ENCODE measurements at regions of chr5 and their contacts with region 1.

Region 1: GRCh38 chr5:112165897-112166806 is 252.9 kb downstream of the EPB41L4A start:
- DNase-seq: peak in 1 of 2 experiments; percentile 51
- H3K4me3 ChIP-seq: no peak overlapping the region
- H3K27ac ChIP-seq: peak overlapping the region; percentile 66
- H3K4me1 ChIP-seq: peaks cover 3 to 19% (median 10%) of the 10 kb centered on the region in 4 experiments; a peak in 4 of 7 replicates
- H3K27me3 ChIP-seq: no peaks in the 10 kb centered on the region
- CTCF ChIP-seq: no peak
- EP300 ChIP-seq: peak in 1 of 2 experiments; percentile 29; a peak in 1 of 3 replicates
- POLR2A ChIP-seq: peak; percentile 68 to 82
- RAD21 ChIP-seq: no peak

Region 2: DNA sequence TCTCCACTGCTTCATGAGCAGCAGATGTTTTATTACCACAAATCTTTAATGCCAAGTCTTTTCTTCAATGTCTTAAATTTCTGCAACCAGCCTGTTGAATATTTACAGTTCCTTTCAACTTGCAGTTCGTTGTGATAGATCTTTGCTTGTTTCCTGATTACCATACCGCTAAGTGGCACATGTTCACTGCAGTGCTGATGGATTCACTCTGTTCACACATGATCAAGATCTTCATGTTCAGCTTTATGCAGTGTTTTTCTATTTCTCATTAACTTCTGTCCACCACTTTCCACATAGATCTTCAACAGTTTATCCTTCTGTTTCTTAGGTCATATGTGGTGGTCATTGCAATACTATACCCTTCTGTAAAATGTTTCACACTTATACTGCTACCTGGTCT is 27.6 kb before region 1 on chr5:
- CTCF ChIA-PET with region 1: no interaction called
- POLR2A ChIA-PET with region 1: no interaction called
- DNase-seq: no peak
- H3K4me3 ChIP-seq: no peak overlapping the region
- H3K27ac ChIP-seq: no peak overlapping the region
- H3K4me1 ChIP-seq: no peaks in the 10 kb centered on the region
- H3K27me3 ChIP-seq: no peaks in the 10 kb centered on the region
- CTCF ChIP-seq: no peak
- EP300 ChIP-seq: no peak
- POLR2A ChIP-seq: no peak
- RAD21 ChIP-seq: no peak

Region 3: DNA sequence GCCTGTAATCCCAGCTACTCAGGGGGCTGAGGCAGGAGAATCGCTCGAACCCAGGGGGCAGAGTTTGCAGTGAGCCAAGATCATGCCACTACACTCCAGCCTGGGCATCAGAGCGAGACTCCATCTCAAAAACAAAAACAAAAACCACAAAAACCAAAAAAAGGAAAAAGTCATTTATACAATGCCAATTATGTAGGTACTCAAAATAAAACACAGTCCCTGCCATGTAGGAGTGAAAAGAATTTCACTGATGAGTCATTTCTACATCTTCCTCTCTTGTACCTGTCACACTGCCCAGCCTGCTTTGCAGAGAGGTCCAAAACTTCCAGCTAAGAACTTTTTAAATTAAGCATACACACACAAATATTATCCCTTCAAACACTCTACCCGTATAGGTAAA is 37.1 kb after region 1 on chr5:
- CTCF ChIA-PET with region 1: no interaction called
- POLR2A ChIA-PET with region 1: interaction called, 10 read pairs
- DNase-seq: no peak
- H3K4me3 ChIP-seq: no peak overlapping the region
- H3K27ac ChIP-seq: no peak overlapping the region
- H3K4me1 ChIP-seq: peaks cover 0 to 11% (median 3%) of the 10 kb centered on the region in 4 experiments; a peak in 3 of 7 replicates
- H3K27me3 ChIP-seq: no peaks in the 10 kb centered on the region
- CTCF ChIP-seq: no peak
- EP300 ChIP-seq: no peak
- POLR2A ChIP-seq: no peak
- RAD21 ChIP-seq: no peak

Region 4: GRCh38 chr5:112479407-112479806 is 313.3 kb after region 1 on chr5:
- CTCF ChIA-PET with region 1: no interaction called
- POLR2A ChIA-PET with region 1: no interaction called
- DNase-seq: no peak
- H3K4me3 ChIP-seq: no peak overlapping the region
- H3K27ac ChIP-seq: no peak overlapping the region
- H3K4me1 ChIP-seq: no peaks in the 10 kb centered on the region
- H3K27me3 ChIP-seq: no peaks in the 10 kb centered on the region
- CTCF ChIP-seq: no peak
- EP300 ChIP-seq: no peak
- POLR2A ChIP-seq: no peak
- RAD21 ChIP-seq: no peak